Activated CD4-positive, alpha-beta T cell treated with anti-CD3 and anti-CD28 coated beads for 36 hours (primary cell): ENCODE measurements at regions of chr12 and their contacts with region 1.

Region 1: DNA sequence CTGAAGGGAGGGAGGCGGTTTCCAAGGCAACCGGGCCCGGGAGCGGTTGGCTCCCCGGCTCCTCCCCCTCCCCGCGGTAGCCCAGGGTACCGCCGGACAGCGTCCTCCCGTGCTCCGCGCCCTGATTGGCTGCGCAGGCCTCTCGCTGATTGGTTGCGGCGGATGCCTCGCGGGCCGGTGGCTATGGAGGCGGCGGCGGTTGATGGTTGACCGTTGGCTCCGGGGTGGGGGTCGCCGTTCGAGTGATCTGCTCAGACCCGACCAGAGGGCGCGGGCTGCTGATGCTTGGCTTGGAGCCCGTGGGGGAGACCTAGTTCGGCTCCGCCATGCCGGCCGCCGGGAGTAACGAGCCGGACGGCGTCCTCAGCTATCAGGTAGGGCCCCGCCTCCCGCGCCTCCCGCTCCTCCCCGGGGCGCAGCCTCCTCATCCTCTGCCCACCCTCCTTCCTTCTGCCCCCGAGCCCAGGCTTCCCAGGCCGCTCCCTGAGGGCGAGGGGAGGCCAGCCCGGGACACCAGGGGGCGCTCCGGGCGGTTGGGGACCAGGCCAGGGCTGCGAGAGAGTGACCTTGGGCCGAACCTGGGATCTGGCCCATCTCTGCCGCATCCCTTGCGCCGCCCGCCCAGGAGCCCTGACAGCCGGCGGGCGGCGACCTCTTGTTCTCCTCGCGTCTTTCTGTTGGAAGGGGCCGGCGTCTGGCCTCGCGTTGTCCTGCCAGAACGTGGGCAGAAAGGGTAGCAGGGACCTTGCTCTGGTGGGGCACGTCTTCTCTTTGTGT is at the start of gene SLC4A8:
- DNase-seq: peak; percentile 89
- ATAC-seq: peak; percentile 96
- H3K4me3 Mint-ChIP-seq: peak within 1 kb of the TSS; percentile 71
- H3K27ac Mint-ChIP-seq: no peak within 1 kb of the TSS
- H3K4me1 Mint-ChIP-seq: peaks cover 11% of the 10 kb centered on the region
- H3K27me3 Mint-ChIP-seq: no peaks in the 10 kb centered on the region
- total RNA-seq, gene SLC4A8: 1.7 to 2.0 TPM

Region 2: DNA sequence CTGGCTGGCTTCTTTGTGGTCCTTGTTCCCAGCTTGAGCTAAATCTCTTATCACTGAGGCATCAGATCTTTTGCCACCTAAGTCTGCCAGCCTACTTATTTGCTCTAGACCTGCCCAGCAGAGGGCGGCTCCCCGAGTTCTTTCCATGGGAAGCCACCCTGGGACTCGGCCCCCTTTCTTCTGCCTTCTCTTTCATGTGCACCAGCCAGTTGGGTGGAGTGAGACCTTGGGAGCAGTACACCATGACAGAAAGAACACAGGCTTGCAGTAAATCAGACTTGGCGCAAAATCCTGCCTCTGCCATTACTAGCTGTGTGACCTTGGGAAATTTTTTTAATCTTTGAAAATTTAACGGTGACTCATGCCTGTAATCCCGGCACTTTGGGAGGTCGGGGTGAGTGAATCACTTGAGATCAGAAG is 162.1 kb before region 1 on chr12:
- CTCF ChIA-PET with region 1: no interaction called
- POLR2A ChIA-PET with region 1: no interaction called
- intact Hi-C with region 1: no loop called
- DNase-seq: peak; percentile 65
- ATAC-seq: no peak
- H3K4me3 Mint-ChIP-seq: no peak overlapping the region
- H3K27ac Mint-ChIP-seq: no peak overlapping the region
- H3K4me1 Mint-ChIP-seq: peaks cover 19% of the 10 kb centered on the region
- H3K27me3 Mint-ChIP-seq: peaks cover 2% of the 10 kb centered on the region

Region 3: GRCh38 chr12:51391283-51392162 is 33.3 kb before region 1 on chr12 and contains the start of gene GALNT6:
- CTCF ChIA-PET with region 1: interaction called, 10 read pairs
- POLR2A ChIA-PET with region 1: no interaction called
- intact Hi-C with region 1: loop called in 1 of 2 experiments (anchors 2 kb)
- DNase-seq: peak; percentile 78
- ATAC-seq: peak; percentile 43
- H3K4me3 Mint-ChIP-seq: peak within 1 kb of the TSS; percentile 85
- H3K27ac Mint-ChIP-seq: peak within 1 kb of the TSS; percentile 67
- H3K4me1 Mint-ChIP-seq: peaks cover 79% of the 10 kb centered on the region
- H3K27me3 Mint-ChIP-seq: no peaks in the 10 kb centered on the region
- total RNA-seq, gene GALNT6: 11.7 to 12.0 TPM

Region 4: DNA sequence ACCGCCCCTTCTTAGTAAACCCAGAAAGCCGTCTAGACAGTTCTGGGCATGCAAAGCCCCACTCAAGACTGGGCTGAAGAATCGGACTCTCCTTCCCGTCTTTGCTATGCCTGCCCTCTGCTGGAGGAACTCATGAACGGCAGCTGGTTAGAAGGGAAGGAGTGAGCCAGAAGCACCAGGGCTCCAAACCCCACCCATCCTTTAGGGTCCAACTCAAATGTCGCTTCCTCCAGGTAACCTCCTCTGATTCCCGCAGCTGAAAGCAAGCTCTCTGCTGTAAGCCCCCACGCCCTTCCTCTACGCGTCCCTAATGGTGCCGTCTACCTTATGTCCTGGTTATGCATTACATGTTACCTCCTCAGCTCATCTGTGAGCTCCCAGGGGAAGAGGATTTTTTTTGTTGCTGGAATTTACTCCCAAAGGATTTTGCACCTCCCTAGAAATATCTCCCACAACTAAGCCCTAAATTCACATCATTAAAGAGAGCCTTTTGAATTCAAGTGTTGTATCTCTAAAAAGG is 107.2 kb after region 1 on chr12:
- CTCF ChIA-PET with region 1: interaction called, 138 read pairs
- POLR2A ChIA-PET with region 1: no interaction called
- intact Hi-C with region 1: loop called (anchors 1 kb)
- DNase-seq: peak; percentile 85
- ATAC-seq: peak; percentile 94
- H3K4me3 Mint-ChIP-seq: no peak overlapping the region
- H3K27ac Mint-ChIP-seq: no peak overlapping the region
- H3K4me1 Mint-ChIP-seq: peaks cover 6% of the 10 kb centered on the region
- H3K27me3 Mint-ChIP-seq: peaks cover 2% of the 10 kb centered on the region

Region 5: DNA sequence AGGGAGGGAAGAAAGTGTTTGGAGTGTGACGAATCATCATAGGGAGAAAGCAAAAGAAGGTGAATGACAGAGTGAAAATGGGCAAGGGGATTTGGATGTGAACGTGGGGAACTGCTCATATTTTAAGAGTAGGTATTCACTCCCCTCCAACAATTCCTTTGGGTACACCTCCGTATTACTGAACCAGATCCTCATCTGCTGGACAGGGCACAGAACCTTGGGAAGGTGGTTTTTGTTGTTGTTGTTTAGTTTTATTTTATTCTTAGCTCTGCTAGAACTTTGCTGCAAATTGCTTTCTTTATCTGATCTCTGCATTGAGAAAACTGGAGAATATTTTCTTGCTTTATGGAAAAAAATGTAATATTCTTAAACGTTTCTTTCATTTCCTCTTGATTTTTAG is 173.3 kb after region 1 on chr12:
- CTCF ChIA-PET with region 1: no interaction called
- POLR2A ChIA-PET with region 1: no interaction called
- intact Hi-C with region 1: no loop called
- DNase-seq: no peak
- ATAC-seq: no peak
- H3K4me3 Mint-ChIP-seq: no peak overlapping the region
- H3K27ac Mint-ChIP-seq: no peak overlapping the region
- H3K4me1 Mint-ChIP-seq: no peaks in the 10 kb centered on the region
- H3K27me3 Mint-ChIP-seq: peaks cover 29% of the 10 kb centered on the region

Region 6: GRCh38 chr12:51678086-51678724 is 253.4 kb after region 1 on chr12:
- CTCF ChIA-PET with region 1: interaction called, 5 read pairs
- POLR2A ChIA-PET with region 1: no interaction called
- intact Hi-C with region 1: loop called (anchors 1 to 5 kb)
- DNase-seq: peak; percentile 38
- ATAC-seq: peak; percentile 61
- H3K4me3 Mint-ChIP-seq: no peak overlapping the region
- H3K27ac Mint-ChIP-seq: no peak overlapping the region
- H3K4me1 Mint-ChIP-seq: peaks cover 4% of the 10 kb centered on the region
- H3K27me3 Mint-ChIP-seq: peaks cover 8% of the 10 kb centered on the region

Region 7: GRCh38 chr12:51871126-51871525 is 446.3 kb after region 1 on chr12:
- CTCF ChIA-PET with region 1: interaction called, 16 read pairs
- POLR2A ChIA-PET with region 1: no interaction called
- intact Hi-C with region 1: loop called (anchors 1 to 5 kb)
- DNase-seq: no peak
- ATAC-seq: no peak
- H3K4me3 Mint-ChIP-seq: no peak overlapping the region
- H3K27ac Mint-ChIP-seq: no peak overlapping the region
- H3K4me1 Mint-ChIP-seq: peaks cover 11% of the 10 kb centered on the region
- H3K27me3 Mint-ChIP-seq: peaks cover 31% of the 10 kb centered on the region

Region 8: DNA sequence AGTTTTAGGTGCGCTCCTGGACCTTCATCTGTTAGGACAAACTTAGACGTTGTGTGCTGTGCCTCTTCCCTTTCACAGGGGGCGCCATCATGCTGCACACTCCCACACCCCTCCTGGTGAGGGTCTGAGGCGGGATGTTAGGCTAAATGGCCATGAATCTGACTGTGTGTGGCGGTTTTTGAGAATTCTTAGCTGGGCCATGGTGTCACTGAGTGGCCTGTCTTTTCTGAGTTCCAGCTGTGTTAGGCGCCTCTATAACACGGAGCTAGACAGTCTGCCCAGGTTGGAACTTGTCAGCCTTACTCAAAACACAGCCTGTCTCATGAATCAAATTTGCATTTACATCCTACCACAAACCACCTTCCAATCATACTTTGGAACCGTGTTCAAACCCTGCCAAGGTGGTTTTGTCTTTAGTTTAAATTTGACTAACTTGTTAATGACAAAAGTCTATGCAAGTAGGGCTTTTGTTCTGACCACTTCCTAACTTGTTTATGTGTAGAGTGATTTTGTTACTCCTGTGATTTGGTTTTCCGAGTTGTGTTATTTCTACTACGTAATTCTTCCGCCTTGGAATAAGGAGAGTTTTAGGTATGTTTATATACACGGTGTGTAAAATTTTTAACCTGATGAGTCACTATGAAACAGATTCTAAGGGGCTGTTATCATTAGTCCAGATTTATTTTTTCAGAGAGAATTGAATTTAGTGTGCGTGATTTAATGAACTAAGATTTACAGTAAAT is 546.2 kb after region 1 on chr12:
- CTCF ChIA-PET with region 1: no interaction called
- POLR2A ChIA-PET with region 1: no interaction called
- intact Hi-C with region 1: loop called in 1 of 2 experiments (anchors 5 kb)
- DNase-seq: peak; percentile 70
- ATAC-seq: peak; percentile 85
- H3K4me3 Mint-ChIP-seq: peak overlapping the region; percentile 53
- H3K27ac Mint-ChIP-seq: peak overlapping the region; percentile 82
- H3K4me1 Mint-ChIP-seq: peaks cover 64% of the 10 kb centered on the region
- H3K27me3 Mint-ChIP-seq: no peaks in the 10 kb centered on the region